ENCODE measurements at regions of chr6 and their contacts with region 1.

Region 1: GRCh38 chr6:155418017-155418761 is 37.5 kb downstream of the NOX3 start:
- DNase-seq: peak; percentile 86
- ATAC-seq: peak; percentile 83
- H3K4me3 Mint-ChIP-seq: peak overlapping the region; percentile 65
- H3K27ac Mint-ChIP-seq: peak overlapping the region; percentile 98
- H3K4me1 Mint-ChIP-seq: peaks cover 48% of the 10 kb centered on the region
- H3K27me3 Mint-ChIP-seq: no peaks in the 10 kb centered on the region

Region 2: GRCh38 chr6:154733012-154733625 is 685.1 kb before region 1 on chr6 and contains the start of gene SCAF8:
- CTCF ChIA-PET with region 1: no interaction called
- POLR2A ChIA-PET with region 1: no interaction called
- intact Hi-C with region 1: loop called in 1 of 2 experiments (anchors 5 kb)
- DNase-seq: peak; percentile 90
- ATAC-seq: peak; percentile 78
- H3K4me3 Mint-ChIP-seq: peak within 1 kb of the TSS; percentile 86
- H3K27ac Mint-ChIP-seq: peak within 1 kb of the TSS; percentile 94
- H3K4me1 Mint-ChIP-seq: peaks cover 42% of the 10 kb centered on the region
- H3K27me3 Mint-ChIP-seq: no peaks in the 10 kb centered on the region
- total RNA-seq, gene SCAF8: 33.9 to 44.5 TPM

Region 3: DNA sequence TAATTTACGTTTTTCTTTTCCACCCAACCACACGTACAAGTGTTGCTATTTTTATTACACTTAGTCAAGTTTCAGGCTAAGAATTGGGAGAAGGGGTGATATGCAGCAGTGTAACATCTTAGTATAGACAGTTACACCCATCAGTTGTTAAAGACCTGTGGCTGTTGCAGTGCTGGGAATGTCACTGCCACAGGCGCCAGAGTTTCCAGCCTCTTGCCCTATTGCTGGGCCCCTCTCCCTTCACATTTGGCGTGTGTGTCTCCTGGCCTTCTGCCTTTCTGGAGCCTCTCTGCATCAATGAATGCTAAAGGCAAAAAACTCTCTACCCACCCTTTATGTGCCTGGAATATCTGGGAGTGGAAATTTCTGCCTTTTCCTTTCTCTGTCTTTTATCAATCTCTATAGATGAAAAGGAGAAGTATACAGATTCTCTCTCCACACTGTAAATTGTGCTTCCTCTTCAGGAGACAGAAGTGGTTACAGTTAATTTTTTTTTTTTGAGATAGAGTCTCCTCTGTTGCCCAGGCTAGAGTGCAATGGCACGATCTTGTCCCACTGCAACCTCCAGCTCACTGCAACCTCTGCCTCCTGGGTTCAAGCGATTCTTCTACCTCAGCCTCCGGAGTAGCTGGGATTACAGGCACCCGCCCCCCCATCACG is 350.1 kb before region 1 on chr6:
- CTCF ChIA-PET with region 1: no interaction called
- POLR2A ChIA-PET with region 1: no interaction called
- intact Hi-C with region 1: no loop called
- DNase-seq: no peak
- ATAC-seq: no peak
- H3K4me3 Mint-ChIP-seq: no peak overlapping the region
- H3K27ac Mint-ChIP-seq: no peak overlapping the region
- H3K4me1 Mint-ChIP-seq: no peaks in the 10 kb centered on the region
- H3K27me3 Mint-ChIP-seq: peaks cover 3% of the 10 kb centered on the region

Region 4: DNA sequence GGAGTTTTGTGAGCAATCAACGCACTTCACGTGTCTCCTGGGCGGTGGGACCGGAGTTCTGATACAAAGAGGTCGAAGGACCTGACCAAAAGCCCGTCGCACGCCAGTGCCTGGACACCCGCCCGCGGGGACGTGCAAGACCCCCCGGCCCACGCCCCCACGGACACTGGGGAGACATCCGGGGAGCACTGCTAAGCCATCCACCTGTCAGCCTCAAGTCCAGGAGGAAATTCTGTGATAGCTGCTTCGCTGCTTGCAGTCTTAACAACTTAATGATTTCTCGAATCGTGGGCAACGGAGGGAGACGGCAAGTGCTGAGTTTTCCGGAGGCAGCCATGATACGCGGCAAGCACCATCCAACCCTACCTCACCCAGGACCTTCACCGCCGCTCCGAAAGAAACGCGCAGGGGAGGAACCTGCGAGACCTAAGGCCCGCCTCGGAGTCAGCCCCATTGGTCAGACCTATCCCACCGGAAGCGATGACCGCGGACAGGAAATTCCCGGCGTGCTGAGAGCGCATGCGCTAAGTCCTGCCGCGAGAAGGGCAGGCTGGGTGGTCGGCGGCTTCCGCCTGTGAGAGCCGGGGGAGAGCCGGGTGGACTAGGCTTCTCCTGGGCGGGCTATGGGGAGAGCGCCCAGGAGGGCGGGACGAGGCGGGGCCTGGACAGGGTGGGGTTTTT is 104.0 kb before region 1 on chr6 and contains the start of gene TFB1M:
- CTCF ChIA-PET with region 1: no interaction called
- POLR2A ChIA-PET with region 1: interaction called, 3 read pairs
- intact Hi-C with region 1: loop called in 1 of 2 experiments (anchors 1 kb)
- DNase-seq: peak; percentile 99
- ATAC-seq: peak; percentile 95
- H3K4me3 Mint-ChIP-seq: peak within 1 kb of the TSS; percentile 90
- H3K27ac Mint-ChIP-seq: peak within 1 kb of the TSS; percentile 98
- H3K4me1 Mint-ChIP-seq: peaks cover 39% of the 10 kb centered on the region
- H3K27me3 Mint-ChIP-seq: no peaks in the 10 kb centered on the region
- total RNA-seq, gene TFB1M: 45.5 to 56.4 TPM

Region 5: DNA sequence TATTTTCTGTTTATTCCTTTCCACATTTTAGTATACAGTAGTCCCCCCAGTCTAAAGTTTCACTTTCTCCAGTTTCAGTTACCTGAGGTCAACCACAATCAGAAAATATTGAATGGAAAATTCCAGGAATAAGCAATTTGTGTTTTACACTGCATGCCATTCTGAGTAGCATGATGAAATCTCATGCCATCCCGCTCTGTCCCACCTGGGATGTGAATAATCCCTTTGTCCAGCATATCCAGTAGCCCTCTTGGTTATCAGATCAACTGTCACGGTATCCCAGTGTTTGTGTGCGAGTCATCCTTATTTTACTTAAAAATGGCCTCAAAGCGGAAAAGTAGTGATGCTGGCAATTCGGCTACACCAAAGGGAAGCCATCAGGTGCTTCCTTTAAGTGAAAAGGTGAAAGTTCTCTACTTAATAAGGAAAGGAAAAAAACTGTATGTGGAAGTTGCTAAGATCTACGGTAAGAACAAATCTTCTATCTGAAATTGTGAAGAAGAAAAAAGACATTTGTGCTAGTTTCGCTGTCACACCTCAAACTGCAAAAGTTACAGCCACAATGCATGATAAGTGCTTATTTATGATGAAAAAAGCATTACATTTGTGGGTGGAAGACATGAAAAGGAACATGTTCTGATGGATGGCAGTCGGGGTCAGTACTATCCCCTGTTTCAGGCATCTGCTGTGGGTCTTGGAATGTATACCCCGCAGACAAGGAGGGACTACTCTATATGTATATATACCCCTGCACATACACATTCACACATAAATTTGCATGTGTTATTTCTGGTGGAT is 26.1 kb after region 1 on chr6:
- CTCF ChIA-PET with region 1: no interaction called
- POLR2A ChIA-PET with region 1: no interaction called
- intact Hi-C with region 1: loop called in 1 of 2 experiments (anchors 2 kb)
- DNase-seq: no peak
- ATAC-seq: no peak
- H3K4me3 Mint-ChIP-seq: no peak overlapping the region
- H3K27ac Mint-ChIP-seq: no peak overlapping the region
- H3K4me1 Mint-ChIP-seq: peaks cover 15% of the 10 kb centered on the region
- H3K27me3 Mint-ChIP-seq: no peaks in the 10 kb centered on the region

Region 6: DNA sequence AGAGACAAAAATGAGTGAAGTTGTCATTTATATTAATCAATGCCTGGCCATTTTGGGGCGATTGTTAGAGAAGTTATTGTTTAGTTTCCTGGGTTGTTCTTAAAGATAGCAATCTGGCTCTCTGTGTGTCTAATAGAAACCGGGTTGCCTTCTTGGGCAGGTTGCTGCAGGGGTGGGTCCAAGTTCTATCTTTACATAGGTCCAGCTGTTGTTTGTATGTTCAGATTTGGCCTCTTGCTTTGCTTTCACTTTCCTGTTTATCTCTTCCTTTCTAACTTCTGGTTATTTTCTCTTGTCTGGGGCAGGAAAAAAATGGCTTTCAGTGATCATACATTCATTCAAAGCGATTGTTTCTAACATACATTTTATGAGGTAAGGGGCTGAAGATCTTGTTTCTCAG is 165.8 kb after region 1 on chr6:
- CTCF ChIA-PET with region 1: no interaction called
- POLR2A ChIA-PET with region 1: no interaction called
- intact Hi-C with region 1: no loop called
- DNase-seq: no peak
- ATAC-seq: no peak
- H3K4me3 Mint-ChIP-seq: no peak overlapping the region
- H3K27ac Mint-ChIP-seq: no peak overlapping the region
- H3K4me1 Mint-ChIP-seq: no peaks in the 10 kb centered on the region
- H3K27me3 Mint-ChIP-seq: peaks cover under 1% of the 10 kb centered on the region

Region 7: GRCh38 chr6:155628306-155628705 is 210.1 kb after region 1 on chr6:
- CTCF ChIA-PET with region 1: no interaction called
- POLR2A ChIA-PET with region 1: interaction called, 3 read pairs
- intact Hi-C with region 1: loop called in 1 of 2 experiments (anchors 2 kb)
- DNase-seq: peak; percentile 81
- ATAC-seq: peak; percentile 95
- H3K4me3 Mint-ChIP-seq: peak overlapping the region; percentile 54
- H3K27ac Mint-ChIP-seq: peak overlapping the region; percentile 98
- H3K4me1 Mint-ChIP-seq: peaks cover 21% of the 10 kb centered on the region
- H3K27me3 Mint-ChIP-seq: peaks cover 3% of the 10 kb centered on the region

Region 8: GRCh38 chr6:156396068-156396771 is 978.0 kb after region 1 on chr6:
- CTCF ChIA-PET with region 1: no interaction called
- POLR2A ChIA-PET with region 1: no interaction called
- intact Hi-C with region 1: loop called in 1 of 2 experiments (anchors 5 kb)
- DNase-seq: peak; percentile 46
- ATAC-seq: peak; percentile 66
- H3K4me3 Mint-ChIP-seq: peak overlapping the region; percentile 45
- H3K27ac Mint-ChIP-seq: peak overlapping the region; percentile 72
- H3K4me1 Mint-ChIP-seq: peaks cover 77% of the 10 kb centered on the region
- H3K27me3 Mint-ChIP-seq: peaks cover 4% of the 10 kb centered on the region